Activated naive CD4-positive, alpha-beta T cell treated with anti-CD3 and anti-CD28 coated beads for 36 hours (primary cell): ENCODE measurements at regions of chr1 and their contacts with region 1.

Region 1: DNA sequence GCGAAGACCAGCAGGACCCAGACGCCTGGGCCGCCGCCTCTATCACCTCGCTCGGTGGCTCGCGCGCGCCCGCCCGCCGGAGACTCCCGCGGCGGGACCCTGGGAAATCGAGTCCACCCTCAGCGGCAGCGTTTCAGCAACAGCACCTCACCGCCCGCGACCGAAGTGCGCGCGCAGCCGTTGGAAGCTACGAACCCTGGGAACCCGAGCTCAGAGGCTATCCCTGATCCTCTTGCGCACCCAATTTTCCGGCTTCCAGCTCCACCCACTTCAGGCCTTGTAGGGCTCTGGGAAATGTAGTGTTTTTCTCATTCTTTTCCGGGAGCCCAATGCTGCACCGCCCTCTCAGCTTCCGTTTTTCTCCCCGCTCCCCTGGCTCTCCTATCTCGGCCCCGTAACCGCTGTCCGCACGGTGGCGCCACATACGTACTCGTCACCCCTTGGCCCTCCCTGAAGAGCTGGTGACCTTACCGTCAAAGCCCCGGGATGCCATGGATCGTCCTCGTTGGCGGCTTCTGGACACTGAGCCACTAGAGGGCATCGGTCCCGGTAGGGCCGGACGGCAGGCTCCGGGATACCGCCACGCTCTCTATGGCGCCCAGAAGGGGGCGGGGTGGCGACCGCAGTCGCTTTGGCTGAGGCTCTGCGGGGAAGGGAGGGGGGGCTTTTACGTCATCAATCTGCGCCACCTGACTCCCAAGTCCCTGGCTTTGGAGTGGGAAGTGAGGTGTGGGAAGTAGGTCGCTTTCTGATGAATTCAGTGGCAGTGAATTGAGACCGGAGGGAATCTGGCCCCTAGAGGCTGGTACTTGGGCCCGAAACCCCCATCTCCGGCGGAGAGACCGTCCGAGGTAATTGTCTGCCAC is at the starts of genes ODR4 and TPR:
- DNase-seq: peak; percentile 98
- H3K4me3 Mint-ChIP-seq: peak within 1 kb of the TSS; percentile 98
- H3K27ac Mint-ChIP-seq: peak within 1 kb of the TSS; percentile 95
- H3K4me1 Mint-ChIP-seq: peaks cover 38% of the 10 kb centered on the region
- H3K27me3 Mint-ChIP-seq: no peaks in the 10 kb centered on the region
- total RNA-seq, gene ODR4: 13.0 to 15.5 TPM
- total RNA-seq, gene TPR: 217 to 226 TPM

Region 2: DNA sequence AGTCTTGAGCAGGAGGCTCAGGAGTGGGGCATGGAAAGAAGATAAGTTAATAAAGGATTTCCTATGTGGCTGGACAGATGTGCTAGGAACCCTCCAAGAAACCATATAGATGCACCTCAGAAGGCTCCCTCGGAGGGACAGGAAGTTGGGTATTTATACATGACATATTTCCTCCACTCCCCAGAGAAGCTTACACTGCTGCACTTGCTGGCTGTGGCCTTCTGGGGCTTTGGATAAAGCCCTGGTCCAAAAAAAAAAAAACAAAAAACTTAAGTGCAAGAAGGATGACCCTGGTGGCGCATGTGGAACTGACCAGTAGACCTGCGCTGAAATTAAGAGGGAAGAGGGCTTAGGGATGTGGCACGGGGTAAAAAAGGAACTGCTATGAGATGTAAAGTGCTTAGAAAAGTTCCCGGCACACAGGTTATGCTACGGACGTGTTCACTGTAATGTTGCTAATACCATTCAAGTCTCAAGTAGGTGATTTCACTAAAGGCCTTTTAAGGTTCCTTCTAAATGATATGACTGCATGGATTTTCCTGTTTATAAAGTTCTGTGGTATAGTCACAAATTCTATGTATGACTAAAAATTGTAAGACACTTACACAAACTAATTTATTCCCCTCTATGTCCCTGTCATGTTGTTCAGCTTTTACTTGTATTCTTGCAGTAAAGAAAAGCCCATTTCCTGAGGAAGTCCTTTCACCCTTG is 387.6 kb before region 1 on chr1:
- CTCF ChIA-PET with region 1: no interaction called
- intact Hi-C with region 1: loop called (anchors 5 kb)
- DNase-seq: peak; percentile 44
- H3K4me3 Mint-ChIP-seq: peak overlapping the region; percentile 69
- H3K27ac Mint-ChIP-seq: peak overlapping the region; percentile 98
- H3K4me1 Mint-ChIP-seq: peaks cover 15% of the 10 kb centered on the region
- H3K27me3 Mint-ChIP-seq: no peaks in the 10 kb centered on the region

Region 3: GRCh38 chr1:186304982-186305949 is 70.1 kb before region 1 on chr1:
- CTCF ChIA-PET with region 1: interaction called, 10 read pairs
- intact Hi-C with region 1: loop called (anchors 1 kb)
- DNase-seq: peak; percentile 45
- H3K4me3 Mint-ChIP-seq: no peak overlapping the region
- H3K27ac Mint-ChIP-seq: peak overlapping the region; percentile 95
- H3K4me1 Mint-ChIP-seq: peaks cover 63% of the 10 kb centered on the region
- H3K27me3 Mint-ChIP-seq: no peaks in the 10 kb centered on the region

Region 4: GRCh38 chr1:186363891-186364290 is 11.4 kb before region 1 on chr1:
- CTCF ChIA-PET with region 1: interaction called, 11 read pairs
- intact Hi-C with region 1: loop called (anchors 1 kb)
- DNase-seq: no peak
- H3K4me3 Mint-ChIP-seq: no peak overlapping the region
- H3K27ac Mint-ChIP-seq: no peak overlapping the region
- H3K4me1 Mint-ChIP-seq: peaks cover 2% of the 10 kb centered on the region
- H3K27me3 Mint-ChIP-seq: no peaks in the 10 kb centered on the region

Region 5: DNA sequence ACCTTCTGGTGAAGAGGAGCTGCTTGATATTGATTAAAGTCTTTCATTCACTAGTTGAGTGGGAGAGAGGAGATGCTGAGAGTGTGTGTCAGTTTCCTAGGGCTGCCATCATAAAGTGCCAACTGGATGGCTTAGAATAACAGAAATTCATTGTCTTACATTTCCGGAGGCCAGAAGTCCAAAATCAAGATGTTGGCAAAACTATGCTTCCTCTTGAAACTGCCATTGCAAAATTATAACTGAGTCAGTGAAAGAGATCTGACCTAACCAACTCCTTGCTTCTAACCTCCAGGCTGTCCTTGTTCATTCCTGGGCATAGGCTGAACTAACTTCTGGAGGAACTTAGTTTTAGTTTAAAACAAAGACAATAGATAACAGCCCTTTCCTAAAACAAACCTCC is 257.8 kb after region 1 on chr1:
- CTCF ChIA-PET with region 1: no interaction called
- intact Hi-C with region 1: no loop called
- DNase-seq: no peak
- H3K4me3 Mint-ChIP-seq: no peak overlapping the region
- H3K27ac Mint-ChIP-seq: no peak overlapping the region
- H3K4me1 Mint-ChIP-seq: no peaks in the 10 kb centered on the region
- H3K27me3 Mint-ChIP-seq: peaks cover 10% of the 10 kb centered on the region

Region 6: DNA sequence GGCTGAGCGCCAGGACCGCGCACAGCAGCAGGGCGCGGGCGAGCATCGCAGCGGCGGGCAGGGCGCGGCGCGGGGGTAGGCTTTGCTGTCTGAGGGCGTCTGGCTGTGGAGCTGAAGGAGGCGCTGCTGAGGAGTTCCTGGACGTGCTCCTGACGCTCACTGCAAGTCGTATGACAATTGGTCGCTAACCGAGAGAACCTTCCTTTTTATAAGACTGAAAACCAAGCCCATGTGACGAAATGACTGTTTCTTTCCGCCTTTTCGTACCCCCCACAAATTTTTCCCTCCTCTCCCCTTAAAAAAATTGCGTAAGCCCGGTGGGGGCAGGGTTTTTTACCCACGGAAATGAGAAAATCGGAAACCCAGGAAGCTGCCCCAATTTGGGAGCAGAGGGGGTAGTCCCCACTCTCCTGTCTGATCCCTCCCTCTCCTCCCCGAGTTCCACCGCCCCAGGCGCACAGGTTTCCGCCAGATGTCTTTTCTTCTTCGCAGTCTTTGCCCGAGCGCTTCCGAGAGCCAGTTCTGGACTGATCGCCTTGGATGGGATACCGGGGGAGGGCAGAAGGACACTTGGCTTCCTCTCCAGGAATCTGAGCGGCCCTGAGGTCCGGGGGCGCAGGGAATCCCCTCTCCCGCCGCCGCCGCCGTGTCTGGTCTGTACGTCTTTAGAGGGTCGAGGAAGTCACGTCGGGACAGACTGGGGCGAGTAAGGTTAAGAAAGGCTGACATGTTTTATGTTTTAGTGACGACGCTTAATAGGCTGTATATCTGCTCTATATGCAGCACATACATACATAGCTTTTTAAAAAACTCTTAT is 305.1 kb after region 1 on chr1 and contains the start of gene PTGS2:
- CTCF ChIA-PET with region 1: no interaction called
- intact Hi-C with region 1: loop called (anchors 1 kb)
- DNase-seq: peak; percentile 65
- H3K4me3 Mint-ChIP-seq: peak within 1 kb of the TSS; percentile 78
- H3K27ac Mint-ChIP-seq: no peak within 1 kb of the TSS
- H3K4me1 Mint-ChIP-seq: peaks cover 10% of the 10 kb centered on the region
- H3K27me3 Mint-ChIP-seq: peaks cover 52% of the 10 kb centered on the region
- total RNA-seq, gene PTGS2: 1.8 to 2.0 TPM